Calu3 (cell line): ENCODE measurements at regions of chr18 and their contacts with region 1.

Region 1: DNA sequence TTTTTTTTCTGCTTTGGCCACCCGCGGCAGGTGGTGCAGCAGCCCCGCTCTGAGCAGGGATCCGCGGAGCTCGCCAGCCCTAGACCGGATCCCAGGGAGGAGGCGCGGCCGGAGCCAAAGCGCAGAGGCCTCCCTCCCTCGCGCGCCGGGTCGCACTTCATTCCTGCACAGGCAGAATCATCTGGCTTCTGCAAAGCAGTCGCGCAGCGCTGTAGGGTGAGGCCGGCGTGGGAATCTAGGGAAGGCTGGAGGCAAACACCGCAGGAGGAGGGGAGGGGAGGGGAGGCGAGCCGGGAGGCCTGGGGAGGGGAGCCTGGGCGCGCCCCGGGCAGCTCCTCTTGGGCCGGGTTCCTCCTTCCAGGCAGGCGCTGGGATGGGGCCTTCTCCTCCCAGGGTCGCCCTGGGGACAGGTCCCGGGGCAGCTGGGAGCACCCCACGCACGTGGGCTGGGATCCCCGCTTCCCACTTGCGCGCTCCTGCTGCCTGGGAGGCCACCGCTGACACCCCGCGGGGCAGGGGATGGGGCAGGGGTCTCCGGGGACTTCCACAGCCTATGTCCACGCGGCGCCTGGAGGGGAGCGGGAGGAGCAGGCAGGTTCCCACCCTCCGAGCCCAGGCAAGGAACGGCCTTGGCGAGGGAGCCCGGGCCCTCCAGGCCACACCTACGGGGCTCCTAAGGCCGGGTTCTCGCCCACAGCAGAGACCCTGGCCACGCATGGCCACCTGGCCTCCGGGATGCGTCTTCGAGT is 45.0 kb downstream of the MBP start:
- DNase-seq: peak; percentile 67
- H3K4me3 Mint-ChIP-seq: peak overlapping the region; percentile 67
- H3K27ac Mint-ChIP-seq: peak overlapping the region; percentile 45
- H3K4me1 Mint-ChIP-seq: peaks cover 85% of the 10 kb centered on the region
- H3K27me3 Mint-ChIP-seq: no peaks in the 10 kb centered on the region
- CTCF ChIP-seq: no peak

Region 2: DNA sequence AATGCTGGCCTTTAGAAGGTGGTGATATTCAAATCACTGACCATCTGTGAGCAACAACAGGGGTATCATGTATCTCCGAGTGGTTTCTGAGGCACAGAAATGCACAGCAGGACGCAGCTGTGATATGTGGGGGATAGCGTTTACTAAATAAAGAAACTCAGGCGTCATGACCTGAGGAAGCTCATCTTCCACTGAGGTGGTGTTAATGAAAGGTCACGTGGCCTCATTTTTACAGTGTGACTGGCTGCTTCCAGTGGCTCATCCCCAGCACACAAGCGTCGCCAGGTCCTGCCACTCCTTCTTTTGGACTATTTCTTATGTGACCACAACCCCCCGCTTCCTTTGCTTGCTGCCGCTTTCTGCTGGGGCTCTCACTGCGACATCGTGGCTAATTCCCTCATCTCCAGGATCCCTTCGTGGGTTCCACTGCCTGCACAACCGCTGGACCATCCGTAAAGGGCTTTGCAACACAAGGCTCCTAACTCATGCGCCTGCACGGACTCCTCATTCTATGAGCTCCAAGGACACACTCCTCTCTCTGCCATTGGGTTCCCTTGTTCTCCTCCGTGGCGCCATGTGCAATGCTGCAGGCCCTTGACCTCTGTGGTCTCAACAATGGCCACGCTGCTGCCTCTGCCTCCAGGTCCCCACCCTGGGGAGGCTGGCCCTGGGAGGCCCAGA is 64.3 kb before region 1 on chr18:
- CTCF ChIA-PET with region 1: no interaction called
- intact Hi-C with region 1: no loop called
- DNase-seq: no peak
- H3K4me3 Mint-ChIP-seq: no peak overlapping the region
- H3K27ac Mint-ChIP-seq: no peak overlapping the region
- H3K4me1 Mint-ChIP-seq: peaks cover 9% of the 10 kb centered on the region
- H3K27me3 Mint-ChIP-seq: no peaks in the 10 kb centered on the region
- CTCF ChIP-seq: no peak

Region 3: DNA sequence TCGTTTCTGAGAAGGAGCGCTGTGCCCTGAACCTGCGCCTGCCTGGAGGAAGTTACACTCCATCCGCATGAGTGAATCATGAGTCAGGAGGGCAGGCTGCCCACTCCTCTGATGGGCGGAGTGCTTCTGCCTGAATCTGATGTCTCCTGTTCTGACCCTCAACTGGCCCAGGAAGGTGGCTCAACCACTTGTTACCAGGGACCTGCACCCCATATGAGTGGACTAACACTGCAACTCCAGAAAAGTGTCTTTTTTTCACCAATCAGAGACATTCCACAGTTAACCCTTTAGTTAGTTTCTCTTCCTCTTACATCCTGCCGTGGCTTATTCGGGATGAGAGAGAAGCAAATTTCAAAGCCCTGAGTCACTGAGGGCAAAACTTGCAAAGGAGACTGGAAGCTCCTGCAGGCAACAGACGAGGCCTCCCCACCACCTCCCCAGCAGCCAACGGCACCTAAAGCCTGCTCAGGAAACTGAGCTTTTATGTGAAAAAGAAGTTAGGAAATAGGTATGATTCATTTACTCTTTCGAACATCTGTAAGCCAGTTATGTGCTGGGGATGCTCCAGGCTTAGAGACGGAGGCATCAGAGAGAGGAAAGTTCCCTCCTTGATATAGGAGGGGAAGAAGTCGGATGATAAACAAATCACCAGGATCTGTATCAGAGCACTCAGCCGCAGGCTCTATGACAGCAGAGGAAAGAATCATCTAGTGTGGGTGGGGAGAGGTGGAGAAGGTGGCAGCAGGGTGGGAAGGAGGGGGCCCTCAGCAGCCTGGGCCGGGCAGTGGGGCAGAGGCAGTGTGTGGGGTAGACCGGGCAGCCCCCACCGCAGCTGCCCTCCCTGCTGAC is 14.1 kb after region 1 on chr18:
- CTCF ChIA-PET with region 1: interaction called, 5 read pairs
- intact Hi-C with region 1: loop called (anchors 1 kb)
- DNase-seq: peak; percentile 94
- H3K4me3 Mint-ChIP-seq: peak overlapping the region; percentile 57
- H3K27ac Mint-ChIP-seq: peak overlapping the region; percentile 94
- H3K4me1 Mint-ChIP-seq: peaks cover 81% of the 10 kb centered on the region
- H3K27me3 Mint-ChIP-seq: no peaks in the 10 kb centered on the region
- CTCF ChIP-seq: no peak